AG04450 (cell line): ENCODE measurements at regions of chr6 and their contacts with region 1.

Region 1: DNA sequence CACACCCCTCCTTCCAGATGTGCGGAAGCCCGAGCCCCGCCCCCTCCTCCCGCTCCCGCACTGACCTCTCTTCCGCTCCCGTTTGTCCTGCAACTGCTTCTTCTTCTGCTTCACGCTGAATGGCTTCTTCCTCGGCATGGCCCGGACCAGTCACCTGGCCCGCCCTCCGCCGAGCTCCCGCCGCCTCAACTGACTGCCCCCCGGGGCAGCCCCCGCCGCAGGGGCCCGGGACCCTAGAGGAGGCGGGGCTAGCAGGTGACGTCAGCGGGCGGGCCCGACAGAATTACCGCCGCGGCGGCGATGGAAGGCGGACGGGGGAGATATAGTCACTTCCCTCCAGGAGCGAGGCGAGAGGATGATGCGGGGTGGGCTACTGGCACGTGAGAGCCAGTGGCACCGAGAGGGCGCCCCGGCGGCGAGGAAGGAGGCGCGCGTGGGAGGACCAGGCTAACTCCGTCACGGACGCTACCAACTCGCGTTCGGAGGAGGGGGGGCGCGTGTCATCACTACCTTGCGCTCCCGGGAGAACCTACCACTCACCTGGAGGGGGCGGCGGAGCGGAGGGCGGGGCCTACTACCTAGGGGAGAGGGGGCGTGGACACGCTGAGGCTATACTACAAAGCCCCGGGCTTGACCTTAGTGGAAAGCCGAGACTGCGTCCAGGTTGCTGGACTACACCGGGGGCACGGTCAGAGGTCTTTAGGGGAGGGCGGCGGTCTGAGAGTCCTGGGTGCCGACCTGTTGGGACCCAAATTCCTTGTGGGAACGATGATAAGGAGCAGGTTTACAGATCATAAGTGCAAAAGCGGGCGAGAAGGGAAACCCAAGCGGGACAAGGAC is at the start of gene GNL1:
- DNase-seq: peak; percentile 65
- H3K4me3 ChIP-seq: peak within 1 kb of the TSS; percentile 100
- H3K27ac ChIP-seq: peak within 1 kb of the TSS; percentile 97
- H3K27me3 ChIP-seq: no peaks in the 10 kb centered on the region
- CTCF ChIP-seq: 0 out of 2 replicates have a peak, but pooled peaks have one; percentile 8
- polyA plus RNA-seq, gene GNL1: 41.7 and 50.0 TPM in 2 replicates

Region 2: GRCh38 chr6:30571075-30571768 is 14.9 kb after region 1 on chr6 and contains the start of gene ABCF1:
- CTCF ChIA-PET with region 1: no interaction called
- POLR2A ChIA-PET with region 1: interaction called, 14 read pairs
- DNase-seq: peak; percentile 89
- H3K4me3 ChIP-seq: peak within 1 kb of the TSS; percentile 98
- H3K27ac ChIP-seq: peak within 1 kb of the TSS; percentile 95
- H3K27me3 ChIP-seq: no peaks in the 10 kb centered on the region
- CTCF ChIP-seq: no peak
- polyA plus RNA-seq, gene ABCF1: 32.3 and 38.7 TPM in 2 replicates

Region 3: GRCh38 chr6:31158140-31158862 is 602.0 kb after region 1 on chr6 and contains the start of gene TCF19:
- CTCF ChIA-PET with region 1: no interaction called
- POLR2A ChIA-PET with region 1: no interaction called
- DNase-seq: peak; percentile 98
- H3K4me3 ChIP-seq: peak within 1 kb of the TSS; percentile 82
- H3K27ac ChIP-seq: peak within 1 kb of the TSS; percentile 47
- H3K27me3 ChIP-seq: no peaks in the 10 kb centered on the region
- CTCF ChIP-seq: no peak
- polyA plus RNA-seq, gene TCF19: 3.4 and 4.2 TPM in 2 replicates